GM12878 (cell line): ENCODE measurements at regions of chr5 and their contacts with region 1.

Region 1: GRCh38 chr5:35436410-35437057 is 181.1 kb upstream of the SPEF2 start:
- DNase-seq: no peak
- ATAC-seq: peak; percentile 86
- H3K4me3 ChIP-seq: no peak overlapping the region
- H3K27ac ChIP-seq: no peak overlapping the region
- H3K4me1 ChIP-seq: no peaks in the 10 kb centered on the region
- H3K27me3 ChIP-seq: no peaks in the 10 kb centered on the region
- CTCF ChIP-seq: peak; percentile 42 to 50 (median 45); a peak in 4 of 6 replicates
- EP300 ChIP-seq: no peak
- POLR2A ChIP-seq: no peak
- RAD21 ChIP-seq: peak; percentile 41

Region 2: DNA sequence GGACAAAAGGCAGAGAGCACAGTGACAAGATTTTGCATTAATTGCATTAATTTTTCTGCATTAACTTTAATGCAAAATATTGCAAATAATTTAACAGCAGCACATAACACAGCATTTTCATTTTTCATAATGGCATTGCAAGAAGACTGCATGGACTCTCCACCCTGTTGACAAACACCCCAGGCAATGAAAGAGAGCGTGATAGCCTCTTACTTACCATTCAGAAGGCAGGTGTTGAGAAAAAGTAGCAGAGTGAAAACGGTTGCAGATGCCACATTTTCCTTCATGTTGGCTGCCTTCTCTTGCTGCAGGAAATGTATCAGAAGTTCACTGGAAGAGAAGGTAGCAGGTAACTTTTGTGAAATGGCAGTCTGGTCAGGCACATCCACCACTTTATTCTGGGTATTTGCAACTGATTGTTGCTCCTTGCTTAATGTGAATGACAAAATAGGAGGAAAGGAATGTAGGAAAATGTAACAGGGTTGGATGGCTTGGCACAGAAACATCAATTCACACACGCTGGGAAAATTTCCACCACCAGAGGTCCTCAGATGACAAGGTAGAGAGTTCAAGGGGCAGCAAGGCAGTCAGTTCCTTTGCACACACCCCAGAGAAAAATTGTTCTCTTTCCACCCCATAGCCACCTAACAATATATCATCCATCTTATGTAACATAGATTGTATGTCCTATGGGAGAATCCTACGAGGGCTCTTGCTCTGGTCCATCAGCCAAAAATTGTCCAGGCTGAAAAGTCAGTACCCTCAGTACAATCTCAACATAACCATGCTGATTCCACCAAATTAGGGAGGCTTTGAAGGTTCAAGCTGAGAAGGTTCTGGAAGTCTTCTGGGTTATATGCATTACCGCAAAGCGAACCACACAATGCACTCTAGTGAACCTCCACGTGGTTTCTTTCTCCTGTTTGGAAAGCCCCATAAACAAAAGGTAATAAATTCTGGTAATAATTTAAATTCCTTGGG is 346.9 kb before region 1 on chr5:
- CTCF ChIA-PET with region 1: interaction called, 17 read pairs
- POLR2A ChIA-PET with region 1: no interaction called
- RAD21 ChIA-PET with region 1: interaction called, 10 read pairs
- SMC1A ChIA-PET with region 1: interaction called, 12 read pairs
- in situ Hi-C with region 1: no loop called
- intact Hi-C with region 1: loop called (anchors 2 kb)
- DNase-seq: peak; percentile 28
- ATAC-seq: peak; percentile 92
- H3K4me3 ChIP-seq: no peak overlapping the region
- H3K27ac ChIP-seq: no peak overlapping the region
- H3K4me1 ChIP-seq: no peaks in the 10 kb centered on the region
- H3K27me3 ChIP-seq: no peaks in the 10 kb centered on the region
- CTCF ChIP-seq: peak; percentile 75 to 90 (median 78); a peak in 5 of 6 replicates
- EP300 ChIP-seq: no peak
- POLR2A ChIP-seq: no peak
- RAD21 ChIP-seq: peak; percentile 94

Region 3: GRCh38 chr5:35212122-35212982 is 224.2 kb before region 1 on chr5:
- CTCF ChIA-PET with region 1: interaction called, 16 read pairs
- POLR2A ChIA-PET with region 1: no interaction called
- RAD21 ChIA-PET with region 1: interaction called, 29 read pairs
- SMC1A ChIA-PET with region 1: interaction called, 15 read pairs
- in situ Hi-C with region 1: no loop called
- intact Hi-C with region 1: no loop called
- DNase-seq: peak; percentile 71
- ATAC-seq: peak; percentile 85
- H3K4me3 ChIP-seq: no peak overlapping the region
- H3K27ac ChIP-seq: peak overlapping the region; percentile 22; the same call in 1 of the 2 replicates
- H3K4me1 ChIP-seq: peaks cover 12% of the 10 kb centered on the region; the same call in 1 of the 2 replicates
- H3K27me3 ChIP-seq: no peaks in the 10 kb centered on the region
- CTCF ChIP-seq: no peak
- EP300 ChIP-seq: peak; percentile 61 to 71; a peak in 2 of 4 replicates
- POLR2A ChIP-seq: no peak
- RAD21 ChIP-seq: no peak

Region 4: DNA sequence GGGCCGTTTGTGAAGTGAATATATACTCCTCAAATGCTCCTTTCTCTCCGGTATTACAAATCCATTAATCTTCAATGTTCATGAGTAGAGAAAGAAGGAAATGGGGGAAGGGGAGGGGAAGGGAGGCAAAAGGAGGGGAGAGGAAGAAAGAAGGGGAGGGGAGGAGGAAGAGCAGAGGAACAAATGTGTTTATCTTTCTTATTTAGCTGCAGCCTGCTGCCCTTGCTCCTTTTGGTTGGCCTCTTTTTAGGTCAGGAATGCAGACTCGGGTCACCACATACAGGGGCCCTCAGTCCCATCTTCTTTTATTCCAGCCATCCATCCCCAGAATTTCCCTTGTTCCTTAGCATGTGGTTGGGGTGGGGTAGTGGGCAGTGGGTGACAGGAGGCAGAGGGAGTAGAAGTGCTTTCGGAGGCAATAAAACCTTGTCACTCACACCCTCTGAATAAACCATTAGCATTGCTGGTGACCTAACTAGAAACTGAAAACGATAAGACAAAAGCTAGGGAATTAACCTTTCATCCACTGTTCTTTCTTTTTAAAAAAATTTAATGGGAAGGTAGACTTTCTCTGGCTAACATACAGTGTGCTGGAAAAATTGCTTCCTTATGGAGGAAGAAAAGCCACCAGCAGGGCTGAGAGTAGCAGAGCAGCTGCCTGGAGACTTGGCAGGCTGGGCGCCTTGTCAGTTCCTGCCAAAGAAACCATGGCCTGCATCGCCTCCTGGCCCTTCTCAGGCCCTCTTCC is 189.5 kb before region 1 on chr5:
- CTCF ChIA-PET with region 1: interaction called, 29 read pairs
- POLR2A ChIA-PET with region 1: no interaction called
- RAD21 ChIA-PET with region 1: interaction called, 25 read pairs
- SMC1A ChIA-PET with region 1: interaction called, 29 read pairs
- in situ Hi-C with region 1: no loop called
- intact Hi-C with region 1: no loop called
- DNase-seq: no peak
- ATAC-seq: peak; percentile 75
- H3K4me3 ChIP-seq: no peak overlapping the region
- H3K27ac ChIP-seq: no peak overlapping the region; the same call in 1 of the 2 replicates
- H3K4me1 ChIP-seq: no peaks in the 10 kb centered on the region
- H3K27me3 ChIP-seq: no peaks in the 10 kb centered on the region
- CTCF ChIP-seq: no peak
- EP300 ChIP-seq: peak in 1 of 2 experiments; percentile 13; a peak in 1 of 4 replicates
- POLR2A ChIP-seq: no peak
- RAD21 ChIP-seq: no peak

Region 5: GRCh38 chr5:35319333-35320002 is 117.1 kb before region 1 on chr5:
- CTCF ChIA-PET with region 1: interaction called, 8 read pairs
- POLR2A ChIA-PET with region 1: no interaction called
- RAD21 ChIA-PET with region 1: interaction called, 15 read pairs
- SMC1A ChIA-PET with region 1: interaction called, 20 read pairs
- in situ Hi-C with region 1: no loop called
- intact Hi-C with region 1: no loop called
- DNase-seq: peak; percentile 96
- ATAC-seq: peak; percentile 91
- H3K4me3 ChIP-seq: no peak overlapping the region
- H3K27ac ChIP-seq: peak overlapping the region; percentile 66
- H3K4me1 ChIP-seq: peaks cover 11% of the 10 kb centered on the region
- H3K27me3 ChIP-seq: no peaks in the 10 kb centered on the region
- CTCF ChIP-seq: no peak
- EP300 ChIP-seq: peak; percentile 92 to 96
- POLR2A ChIP-seq: no peak
- RAD21 ChIP-seq: no peak

Region 6: DNA sequence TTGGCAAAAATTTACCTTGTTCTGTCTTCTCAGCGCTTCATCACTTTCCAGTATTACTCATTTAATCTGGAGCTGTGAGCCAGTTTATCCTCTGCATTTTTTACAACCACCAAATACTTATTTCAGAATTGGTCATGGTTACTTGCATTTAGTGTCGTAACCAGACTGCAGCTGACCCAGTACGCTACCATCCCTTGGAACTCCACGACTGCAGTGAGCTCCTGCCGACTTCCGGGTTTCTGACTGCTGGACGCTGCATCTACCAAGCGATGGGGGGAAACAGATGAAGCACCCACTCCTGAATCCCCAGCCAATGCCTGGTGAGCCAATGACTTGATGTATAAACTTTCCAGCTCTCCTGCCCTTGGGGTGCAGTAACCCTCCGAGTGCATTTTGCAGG is 31.8 kb before region 1 on chr5:
- CTCF ChIA-PET with region 1: interaction called, 10 read pairs
- POLR2A ChIA-PET with region 1: no interaction called
- RAD21 ChIA-PET with region 1: no interaction called
- SMC1A ChIA-PET with region 1: interaction called, 10 read pairs
- in situ Hi-C with region 1: no loop called
- intact Hi-C with region 1: no loop called
- DNase-seq: no peak
- ATAC-seq: no peak
- H3K4me3 ChIP-seq: no peak overlapping the region
- H3K27ac ChIP-seq: no peak overlapping the region
- H3K4me1 ChIP-seq: no peaks in the 10 kb centered on the region
- H3K27me3 ChIP-seq: no peaks in the 10 kb centered on the region
- CTCF ChIP-seq: no peak
- EP300 ChIP-seq: no peak
- POLR2A ChIP-seq: no peak
- RAD21 ChIP-seq: no peak